B cell (primary cell): ENCODE measurements at regions of chr1 and their contacts with region 1.

Region 1: DNA sequence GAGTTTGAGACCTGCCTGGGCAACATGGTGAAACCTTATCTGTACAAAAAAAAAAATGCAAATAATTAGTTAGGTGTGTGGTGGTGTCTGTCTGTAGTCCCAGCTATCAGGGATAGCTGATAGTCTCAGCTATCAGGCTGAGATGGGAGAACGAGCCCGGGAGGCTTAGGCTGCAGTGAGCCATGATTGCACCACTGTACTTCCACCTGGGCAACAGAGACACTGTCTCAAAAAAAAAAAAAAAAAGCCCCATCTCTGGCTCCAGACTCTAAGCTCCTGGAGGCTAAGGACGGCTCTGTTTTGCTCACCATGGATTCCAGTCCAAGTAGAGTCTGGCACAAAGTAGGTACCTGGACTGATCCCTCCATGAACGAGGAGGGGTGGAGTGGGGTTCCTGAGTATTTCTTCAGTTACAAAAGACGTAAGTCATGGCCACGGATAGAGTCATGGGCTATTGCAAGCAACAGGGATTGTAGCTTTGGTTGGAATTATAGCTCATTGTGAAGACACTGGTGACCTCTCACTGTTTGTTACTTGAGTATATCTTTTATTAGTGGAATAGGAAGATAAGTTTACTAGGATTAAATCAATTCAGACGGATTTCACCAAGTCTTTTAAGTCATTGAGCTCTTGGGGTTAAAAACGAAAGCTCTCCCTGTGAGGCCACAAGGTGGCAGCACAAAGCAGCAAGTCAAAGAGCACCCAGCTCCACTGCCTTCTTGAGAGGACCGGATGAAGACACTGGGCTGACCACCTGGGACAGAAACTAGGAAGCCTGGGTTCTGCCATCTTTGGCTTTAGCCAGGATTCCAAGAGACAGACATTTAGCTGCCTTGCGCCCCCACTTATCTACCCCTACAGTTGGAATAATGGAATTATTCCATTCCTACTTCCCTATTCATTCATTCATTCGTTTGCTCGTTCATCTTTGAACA is 35.6 kb upstream of the TMEM61 start:
- DNase-seq: peak; percentile 62
- ATAC-seq: peak; percentile 47
- H3K4me3 ChIP-seq: no peak overlapping the region
- H3K4me3 Mint-ChIP-seq: no peak overlapping the region
- H3K27ac ChIP-seq: no peak overlapping the region
- H3K27ac Mint-ChIP-seq: no peak overlapping the region
- H3K4me1 ChIP-seq: peaks cover 0 to 4% of the 10 kb centered on the region in 2 donors
- H3K4me1 Mint-ChIP-seq: peaks cover 4% of the 10 kb centered on the region
- H3K27me3 ChIP-seq: no peaks in the 10 kb centered on the region
- H3K27me3 Mint-ChIP-seq: peaks cover 32% of the 10 kb centered on the region
- CTCF ChIP-seq: peak; percentile 79

Region 2: DNA sequence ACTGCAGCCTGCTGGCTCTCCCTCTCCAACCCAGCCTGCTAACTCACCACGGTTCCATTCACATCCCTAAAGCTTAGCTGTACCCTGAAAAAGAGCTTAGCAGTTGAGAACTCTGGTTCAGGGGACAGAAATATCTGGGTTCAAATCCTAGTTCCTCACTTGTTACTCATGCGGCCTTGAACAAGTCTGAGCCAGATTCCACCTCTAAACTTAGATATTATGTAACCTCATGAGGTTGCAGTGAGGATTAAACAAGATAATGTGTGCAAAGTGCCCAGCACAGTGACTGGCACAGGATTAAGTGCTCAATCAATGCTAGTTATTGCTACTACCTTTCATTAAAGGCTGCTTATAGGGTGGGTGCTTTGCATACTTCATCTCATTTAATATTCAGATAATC is 16.6 kb before region 1 on chr1:
- CTCF ChIA-PET with region 1: interaction called, 26 read pairs
- POLR2A ChIA-PET with region 1: no interaction called
- intact Hi-C with region 1: no loop called
- DNase-seq: no peak
- ATAC-seq: no peak
- H3K4me3 ChIP-seq: no peak overlapping the region
- H3K4me3 Mint-ChIP-seq: no peak overlapping the region
- H3K27ac ChIP-seq: no peak overlapping the region
- H3K27ac Mint-ChIP-seq: no peak overlapping the region
- H3K4me1 ChIP-seq: no peaks in the 10 kb centered on the region
- H3K4me1 Mint-ChIP-seq: no peaks in the 10 kb centered on the region
- H3K27me3 ChIP-seq: peaks cover 0 to 5% (median 0%) of the 10 kb centered on the region in 4 experiments
- H3K27me3 Mint-ChIP-seq: peaks cover 27% of the 10 kb centered on the region
- CTCF ChIP-seq: no peak

Region 3: GRCh38 chr1:54996359-54996868 is 51.5 kb after region 1 on chr1:
- CTCF ChIA-PET with region 1: interaction called, 17 read pairs
- POLR2A ChIA-PET with region 1: no interaction called
- intact Hi-C with region 1: loop called (anchors 1 kb)
- DNase-seq: peak; percentile 67
- ATAC-seq: peak; percentile 49
- H3K4me3 ChIP-seq: no peak overlapping the region
- H3K4me3 Mint-ChIP-seq: peak overlapping the region; percentile 40
- H3K27ac ChIP-seq: no peak overlapping the region
- H3K27ac Mint-ChIP-seq: no peak overlapping the region
- H3K4me1 ChIP-seq: peaks cover 10 to 11% of the 10 kb centered on the region in 2 donors
- H3K4me1 Mint-ChIP-seq: peaks cover 14% of the 10 kb centered on the region
- H3K27me3 ChIP-seq: peaks cover 0 to 52% (median 13%) of the 10 kb centered on the region in 4 experiments
- H3K27me3 Mint-ChIP-seq: peaks cover 48% of the 10 kb centered on the region
- CTCF ChIP-seq: peak; percentile 71

Region 4: GRCh38 chr1:55021965-55022546 is 77.2 kb after region 1 on chr1:
- CTCF ChIA-PET with region 1: interaction called, 14 read pairs
- POLR2A ChIA-PET with region 1: no interaction called
- intact Hi-C with region 1: loop called (anchors 1 kb)
- DNase-seq: peak; percentile 52
- ATAC-seq: peak; percentile 56
- H3K4me3 ChIP-seq: no peak overlapping the region
- H3K4me3 Mint-ChIP-seq: no peak overlapping the region
- H3K27ac ChIP-seq: no peak overlapping the region
- H3K27ac Mint-ChIP-seq: no peak overlapping the region
- H3K4me1 ChIP-seq: no peaks in the 10 kb centered on the region
- H3K4me1 Mint-ChIP-seq: no peaks in the 10 kb centered on the region
- H3K27me3 ChIP-seq: peaks cover 0 to 3% (median 0%) of the 10 kb centered on the region in 4 experiments
- H3K27me3 Mint-ChIP-seq: peaks cover 22% of the 10 kb centered on the region
- CTCF ChIP-seq: peak; percentile 64

Region 5: DNA sequence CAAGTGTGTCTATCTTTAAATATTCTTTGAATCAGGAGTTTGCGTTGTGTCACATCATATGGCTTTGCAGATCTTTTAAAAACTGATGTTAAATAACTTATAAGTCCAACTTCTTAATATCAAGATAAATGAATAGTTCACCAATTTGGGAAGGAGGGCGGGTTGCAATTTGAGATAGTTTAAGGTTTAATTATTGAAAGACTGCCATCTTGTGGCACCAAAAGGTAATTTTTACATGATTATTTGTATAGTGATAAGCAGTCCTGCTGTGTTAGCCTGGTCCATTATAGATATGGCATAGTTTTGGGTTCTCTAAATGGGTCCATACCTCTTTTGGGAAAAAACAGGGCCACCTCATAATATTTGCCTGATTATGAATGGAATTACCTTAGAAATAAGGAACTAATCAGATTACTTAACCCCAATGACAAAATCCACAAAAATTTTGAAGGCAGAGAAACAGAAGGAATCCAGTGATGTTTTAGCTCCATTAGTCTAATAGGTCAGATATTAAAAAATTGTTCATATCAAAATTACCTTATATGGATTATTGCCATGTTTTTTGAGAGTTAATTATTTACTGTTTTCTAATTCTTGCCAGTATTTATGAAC is 1764.5 kb after region 1 on chr1:
- CTCF ChIA-PET with region 1: interaction called, 5 read pairs
- POLR2A ChIA-PET with region 1: no interaction called
- intact Hi-C with region 1: loop called (anchors 2 kb)
- DNase-seq: peak; percentile 61
- ATAC-seq: no peak
- H3K4me3 ChIP-seq: no peak overlapping the region
- H3K4me3 Mint-ChIP-seq: no peak overlapping the region
- H3K27ac ChIP-seq: no peak overlapping the region
- H3K27ac Mint-ChIP-seq: no peak overlapping the region
- H3K4me1 ChIP-seq: no peaks in the 10 kb centered on the region
- H3K4me1 Mint-ChIP-seq: no peaks in the 10 kb centered on the region
- H3K27me3 ChIP-seq: peaks cover 0 to 3% (median 0%) of the 10 kb centered on the region in 4 experiments
- H3K27me3 Mint-ChIP-seq: peaks cover 25% of the 10 kb centered on the region
- CTCF ChIP-seq: peak; percentile 90

Region 6: GRCh38 chr1:56821140-56821797 is 1876.4 kb after region 1 on chr1:
- CTCF ChIA-PET with region 1: no interaction called
- POLR2A ChIA-PET with region 1: no interaction called
- intact Hi-C with region 1: loop called (anchors 5 kb)
- DNase-seq: peak; percentile 53
- ATAC-seq: peak; percentile 49
- H3K4me3 ChIP-seq: no peak overlapping the region
- H3K4me3 Mint-ChIP-seq: no peak overlapping the region
- H3K27ac ChIP-seq: no peak overlapping the region
- H3K27ac Mint-ChIP-seq: no peak overlapping the region
- H3K4me1 ChIP-seq: no peaks in the 10 kb centered on the region
- H3K4me1 Mint-ChIP-seq: no peaks in the 10 kb centered on the region
- H3K27me3 ChIP-seq: peaks cover 0 to 5% (median 4%) of the 10 kb centered on the region in 4 experiments
- H3K27me3 Mint-ChIP-seq: peaks cover 33% of the 10 kb centered on the region
- CTCF ChIP-seq: peak; percentile 82